Dendritic cell treated with granulocyte-macrophage colony-stimulating factor and Interleukin-4, amounts not matched to agents 40 ng/mL and 50 ng/mL, for 4 days (primary cell): ENCODE measurements at regions of chr16 and their contacts with region 1.

Region 1: GRCh38 chr16:84617791-84618580 is at the start of gene COTL1:
- H3K4me3 Mint-ChIP-seq: peak within 1 kb of the TSS; percentile 91
- H3K27ac Mint-ChIP-seq: peak within 1 kb of the TSS; percentile 94
- H3K4me1 Mint-ChIP-seq: peaks cover 59% of the 10 kb centered on the region
- H3K27me3 Mint-ChIP-seq: no peaks in the 10 kb centered on the region

Region 2: GRCh38 chr16:83470416-83470815 is 1147.6 kb before region 1 on chr16:
- intact Hi-C with region 1: no loop called
- H3K4me3 Mint-ChIP-seq: no peak overlapping the region
- H3K27ac Mint-ChIP-seq: no peak overlapping the region
- H3K4me1 Mint-ChIP-seq: no peaks in the 10 kb centered on the region
- H3K27me3 Mint-ChIP-seq: peaks cover 2% of the 10 kb centered on the region

Region 3: DNA sequence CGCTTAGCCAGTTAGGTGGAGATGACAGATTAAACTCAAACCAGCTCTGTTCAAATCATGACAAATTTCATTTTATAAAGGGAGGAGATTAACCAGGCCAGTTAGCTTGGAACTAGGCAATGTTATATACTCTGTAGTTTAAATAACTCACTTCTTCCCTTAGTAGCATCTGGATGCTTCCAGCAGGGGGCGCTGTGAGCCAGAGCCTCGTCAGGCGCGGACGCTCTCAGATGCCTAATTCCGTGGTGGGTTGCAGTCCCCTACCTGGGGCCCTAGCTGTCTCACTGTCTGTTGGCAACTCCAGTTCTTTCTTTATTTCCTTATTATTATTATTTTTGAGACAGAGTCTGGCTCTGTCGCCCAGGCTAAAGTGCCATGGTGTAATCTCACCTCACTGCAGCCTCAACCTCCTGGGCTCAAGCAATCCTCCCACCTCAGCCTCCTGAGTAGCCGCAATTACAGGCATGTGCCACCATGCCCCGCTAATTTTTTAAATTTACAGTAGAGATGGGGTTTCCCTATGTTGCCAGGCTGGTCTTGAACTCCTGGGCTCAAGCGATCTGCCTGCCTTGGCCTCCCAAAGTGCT is 340.7 kb before region 1 on chr16:
- intact Hi-C with region 1: loop called (anchors 5 kb)
- H3K4me3 Mint-ChIP-seq: no peak overlapping the region
- H3K27ac Mint-ChIP-seq: no peak overlapping the region
- H3K4me1 Mint-ChIP-seq: no peaks in the 10 kb centered on the region
- H3K27me3 Mint-ChIP-seq: peaks cover 8% of the 10 kb centered on the region

Region 4: DNA sequence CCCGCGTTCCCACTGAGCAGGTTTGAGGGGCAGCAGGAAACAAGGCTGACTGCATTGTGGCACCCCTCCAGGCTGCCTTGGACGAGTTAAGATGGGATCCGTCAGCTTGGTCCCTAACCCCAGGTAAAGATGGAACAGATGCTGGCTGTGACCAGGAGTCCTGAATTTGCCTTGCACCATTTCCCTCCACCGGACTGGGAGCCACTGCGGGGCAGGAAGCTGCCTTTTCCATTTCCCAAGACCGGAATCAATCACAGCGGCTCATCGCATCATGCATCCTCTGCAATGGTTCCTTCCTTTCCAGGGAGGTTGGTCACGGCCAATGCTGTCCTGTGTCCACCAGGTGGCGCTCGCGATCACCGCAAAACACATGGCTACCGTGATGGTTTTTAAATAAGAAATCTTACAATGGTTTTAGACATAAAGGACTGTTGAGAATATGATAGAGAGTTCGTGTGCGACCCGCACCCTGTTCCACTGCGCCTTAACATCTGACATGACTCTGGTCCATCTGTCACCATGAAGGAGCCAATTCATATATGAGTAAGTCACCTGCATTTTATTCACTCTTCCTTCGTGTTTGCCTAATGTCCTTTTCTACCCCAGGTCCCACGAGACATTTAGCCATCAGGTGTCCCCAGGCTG is 106.7 kb before region 1 on chr16:
- intact Hi-C with region 1: loop called (anchors 1 kb)
- H3K4me3 Mint-ChIP-seq: no peak overlapping the region
- H3K27ac Mint-ChIP-seq: no peak overlapping the region
- H3K4me1 Mint-ChIP-seq: peaks cover 55% of the 10 kb centered on the region
- H3K27me3 Mint-ChIP-seq: peaks cover 1% of the 10 kb centered on the region

Region 5: GRCh38 chr16:84562174-84562815 is 55.7 kb before region 1 on chr16:
- intact Hi-C with region 1: loop called (anchors 5 kb)
- H3K4me3 Mint-ChIP-seq: no peak overlapping the region
- H3K27ac Mint-ChIP-seq: peak overlapping the region; percentile 73
- H3K4me1 Mint-ChIP-seq: peaks cover 74% of the 10 kb centered on the region
- H3K27me3 Mint-ChIP-seq: no peaks in the 10 kb centered on the region

Region 6: GRCh38 chr16:84585886-84586285 is 32.1 kb before region 1 on chr16:
- intact Hi-C with region 1: loop called (anchors 2 kb)
- H3K4me3 Mint-ChIP-seq: peak overlapping the region; percentile 59
- H3K27ac Mint-ChIP-seq: peak overlapping the region; percentile 85
- H3K4me1 Mint-ChIP-seq: peaks cover 69% of the 10 kb centered on the region
- H3K27me3 Mint-ChIP-seq: no peaks in the 10 kb centered on the region

Region 7: DNA sequence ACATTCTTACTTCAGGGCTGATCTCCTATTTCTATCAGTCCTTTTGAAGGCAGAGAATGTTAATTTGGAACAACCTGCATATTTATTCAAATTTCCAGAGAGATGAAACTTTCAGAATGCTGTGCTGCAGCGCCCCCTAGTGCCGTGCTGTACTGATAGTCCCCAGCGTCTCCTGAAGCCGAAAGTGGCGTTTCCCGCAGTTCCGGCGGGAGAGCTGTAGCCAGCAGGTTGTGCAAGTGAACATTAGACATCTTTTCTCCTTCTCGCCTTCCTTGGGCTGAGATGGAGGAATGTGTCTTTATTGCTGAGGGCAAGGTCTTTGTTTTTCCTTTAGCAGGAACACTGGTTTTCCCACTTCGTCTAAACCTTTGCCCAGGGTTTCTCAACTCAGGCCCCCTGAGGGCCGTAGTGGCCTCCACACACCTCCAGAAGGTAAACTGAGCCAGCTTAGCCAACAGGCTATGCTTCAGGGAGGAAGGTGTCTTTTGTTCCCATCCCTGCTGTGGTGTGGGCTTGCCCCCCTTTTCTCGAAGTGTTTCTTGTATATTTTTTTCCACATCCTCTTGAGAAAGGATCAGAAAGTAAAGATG is 108.2 kb after region 1 on chr16:
- intact Hi-C with region 1: loop called (anchors 5 kb)
- H3K4me3 Mint-ChIP-seq: peak overlapping the region; percentile 59
- H3K27ac Mint-ChIP-seq: peak overlapping the region; percentile 77
- H3K4me1 Mint-ChIP-seq: peaks cover 72% of the 10 kb centered on the region
- H3K27me3 Mint-ChIP-seq: no peaks in the 10 kb centered on the region